ENCODE measurements at regions of chr6 and their contacts with region 1.

Region 1: DNA sequence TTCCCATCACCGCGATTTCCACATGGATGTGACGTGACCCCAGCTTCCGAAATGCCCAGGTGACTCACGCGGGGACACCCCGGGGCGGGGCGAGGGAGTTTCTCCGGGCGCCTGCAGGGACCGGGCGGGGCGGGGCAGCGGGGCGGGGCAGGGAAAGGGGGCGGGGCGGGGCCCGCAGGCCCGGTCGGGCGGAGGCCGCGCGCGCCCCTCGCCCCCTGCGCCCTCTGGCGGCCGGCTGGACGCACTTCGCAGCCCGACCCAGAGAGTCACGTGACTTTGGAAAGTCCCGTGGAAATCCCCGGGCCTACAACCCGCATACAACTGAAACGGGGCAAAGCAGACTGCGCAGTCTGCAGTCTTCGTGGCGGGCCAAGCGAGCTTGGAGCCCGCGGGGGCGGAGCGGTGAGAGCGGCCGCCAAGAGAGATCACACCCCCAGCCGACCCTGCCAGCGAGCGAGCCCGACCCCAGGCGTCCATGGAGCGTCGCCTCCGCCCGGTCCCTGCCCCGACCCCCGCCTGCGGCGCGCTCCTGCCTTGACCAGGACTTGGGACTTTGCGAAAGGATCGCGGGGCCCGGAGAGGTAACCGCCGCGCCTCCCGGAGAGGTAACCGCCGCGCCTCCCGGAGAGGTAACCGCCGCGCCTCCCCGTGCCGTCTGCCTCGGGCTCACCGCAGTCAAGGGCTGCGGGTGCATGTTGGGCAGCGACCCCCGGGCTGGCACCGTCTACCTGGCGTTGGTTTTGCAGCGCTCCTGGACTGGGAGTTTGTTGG is at the start of gene TNFAIP3:
- DNase-seq: peak; percentile 88 to 99 (median 93)
- ATAC-seq: peak; percentile 78 to 86 (median 82)
- H3K4me3 ChIP-seq: peak within 1 kb of the TSS; percentile 90 to 100
- H3K4me3 Mint-ChIP-seq: peak within 1 kb of the TSS; percentile 92 to 98 (median 96)
- H3K27ac ChIP-seq: peak within 1 kb of the TSS; percentile 99
- H3K27ac Mint-ChIP-seq: peak within 1 kb of the TSS; percentile 95 to 98
- H3K4me1 ChIP-seq: peaks cover 30 to 37% of the 10 kb centered on the region in 2 experiments
- H3K4me1 Mint-ChIP-seq: peaks cover 61 to 69% (median 64%) of the 10 kb centered on the region in 3 donors
- H3K27me3 ChIP-seq: no peaks in the 10 kb centered on the region
- H3K27me3 Mint-ChIP-seq: no peaks in the 10 kb centered on the region
- total RNA-seq, gene TNFAIP3: 109 to 2,994 (median 145) TPM

Region 2: GRCh38 chr6:137707590-137708360 is 159.3 kb before region 1 on chr6:
- CTCF ChIA-PET with region 1: interaction called, 3 to 52 read pairs
- POLR2A ChIA-PET with region 1: interaction called, 9 to 86 read pairs
- DNase-seq: peak; percentile 57 to 96 (median 88)
- ATAC-seq: peak; percentile 76 to 83 (median 80)
- H3K4me3 ChIP-seq: no peak overlapping the region
- H3K4me3 Mint-ChIP-seq: peak overlapping the region; percentile 44 to 71 (median 55)
- H3K27ac ChIP-seq: peak overlapping the region; percentile 90
- H3K27ac Mint-ChIP-seq: peak overlapping the region; percentile 96 to 98
- H3K4me1 ChIP-seq: peaks cover 19 to 48% of the 10 kb centered on the region in 2 experiments
- H3K4me1 Mint-ChIP-seq: peaks cover 45 to 68% (median 57%) of the 10 kb centered on the region in 3 donors
- H3K27me3 ChIP-seq: no peaks in the 10 kb centered on the region
- H3K27me3 Mint-ChIP-seq: no peaks in the 10 kb centered on the region

Region 3: GRCh38 chr6:137717074-137718073 is 149.7 kb before region 1 on chr6:
- CTCF ChIA-PET with region 1: interaction called in 1 of 2 experiments, 24 read pairs
- POLR2A ChIA-PET with region 1: interaction called, 7 to 171 read pairs
- DNase-seq: peak; percentile 25 to 91 (median 81)
- ATAC-seq: peak; percentile 63 to 72 (median 68)
- H3K4me3 ChIP-seq: no peak overlapping the region
- H3K4me3 Mint-ChIP-seq: peak overlapping the region in 1 of 3 donors; percentile 46
- H3K27ac ChIP-seq: peak overlapping the region; percentile 91
- H3K27ac Mint-ChIP-seq: peak overlapping the region; percentile 83 to 95
- H3K4me1 ChIP-seq: peaks cover 20 to 24% of the 10 kb centered on the region in 2 experiments
- H3K4me1 Mint-ChIP-seq: peaks cover 47 to 57% (median 50%) of the 10 kb centered on the region in 3 donors
- H3K27me3 ChIP-seq: no peaks in the 10 kb centered on the region
- H3K27me3 Mint-ChIP-seq: no peaks in the 10 kb centered on the region

Region 4: DNA sequence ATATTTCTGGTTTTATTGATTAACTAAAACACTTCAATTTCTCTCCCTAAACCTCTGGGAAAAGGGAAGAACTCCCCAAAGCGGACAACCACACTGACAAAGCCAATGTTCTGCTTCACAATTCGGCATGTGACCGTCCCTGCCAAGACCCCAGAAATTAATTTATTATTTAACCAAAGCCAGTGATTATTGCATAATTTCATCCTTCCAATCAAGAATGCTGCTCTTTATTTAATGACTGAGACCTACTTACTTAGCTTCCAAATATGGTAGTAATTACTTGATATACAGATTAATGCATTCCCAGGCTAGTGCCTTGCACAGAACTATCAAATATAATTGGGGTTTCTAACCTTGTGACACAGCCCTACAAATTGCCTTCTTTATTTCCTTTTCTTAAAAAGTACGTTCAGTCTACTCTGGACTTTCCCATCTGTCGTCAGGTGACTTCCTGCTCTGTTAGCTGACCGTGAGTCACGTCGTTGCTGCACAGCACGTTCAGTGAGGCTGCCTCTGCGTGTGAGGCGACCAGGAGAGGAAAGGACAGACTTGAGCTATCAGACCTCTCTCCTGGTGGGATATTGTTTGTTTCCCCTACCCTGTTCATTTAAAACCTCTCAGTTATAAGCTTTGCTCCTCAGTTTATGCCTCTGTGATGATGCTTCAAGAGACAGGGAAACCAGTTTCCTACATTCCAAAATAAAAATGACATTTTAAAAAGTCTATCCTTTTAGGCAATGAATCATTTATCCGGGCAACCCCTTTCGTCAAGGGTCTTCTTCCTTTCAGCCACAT is 55.8 kb before region 1 on chr6:
- CTCF ChIA-PET with region 1: interaction called in 1 of 2 experiments, 14 read pairs
- POLR2A ChIA-PET with region 1: interaction called in 1 of 2 experiments, 37 read pairs
- DNase-seq: peak; percentile 23 to 94 (median 71)
- ATAC-seq: peak; percentile 88 to 99 (median 98)
- H3K4me3 ChIP-seq: peak overlapping the region in 1 of 2 donors; percentile 23
- H3K4me3 Mint-ChIP-seq: peak overlapping the region; percentile 21 to 62 (median 38)
- H3K27ac ChIP-seq: peak overlapping the region; percentile 92
- H3K27ac Mint-ChIP-seq: peak overlapping the region; percentile 81 to 95
- H3K4me1 ChIP-seq: peaks cover 9 to 20% of the 10 kb centered on the region in 2 experiments
- H3K4me1 Mint-ChIP-seq: peaks cover 47 to 69% (median 48%) of the 10 kb centered on the region in 3 donors
- H3K27me3 ChIP-seq: no peaks in the 10 kb centered on the region
- H3K27me3 Mint-ChIP-seq: no peaks in the 10 kb centered on the region

Region 5: GRCh38 chr6:137953761-137954160 is 86.7 kb after region 1 on chr6:
- CTCF ChIA-PET with region 1: no interaction called
- POLR2A ChIA-PET with region 1: no interaction called
- DNase-seq: no peak
- ATAC-seq: no peak
- H3K4me3 ChIP-seq: no peak overlapping the region
- H3K4me3 Mint-ChIP-seq: no peak overlapping the region
- H3K27ac ChIP-seq: no peak overlapping the region
- H3K27ac Mint-ChIP-seq: no peak overlapping the region
- H3K4me1 ChIP-seq: peaks cover 7 to 9% of the 10 kb centered on the region in 2 experiments
- H3K4me1 Mint-ChIP-seq: peaks cover 12 to 23% (median 19%) of the 10 kb centered on the region in 3 donors
- H3K27me3 ChIP-seq: no peaks in the 10 kb centered on the region
- H3K27me3 Mint-ChIP-seq: no peaks in the 10 kb centered on the region

Measured in T-cell (primary cell).